CD4-positive, alpha-beta memory T cell (primary cell): ENCODE measurements at regions of chr21 and their contacts with region 1.

Region 1: DNA sequence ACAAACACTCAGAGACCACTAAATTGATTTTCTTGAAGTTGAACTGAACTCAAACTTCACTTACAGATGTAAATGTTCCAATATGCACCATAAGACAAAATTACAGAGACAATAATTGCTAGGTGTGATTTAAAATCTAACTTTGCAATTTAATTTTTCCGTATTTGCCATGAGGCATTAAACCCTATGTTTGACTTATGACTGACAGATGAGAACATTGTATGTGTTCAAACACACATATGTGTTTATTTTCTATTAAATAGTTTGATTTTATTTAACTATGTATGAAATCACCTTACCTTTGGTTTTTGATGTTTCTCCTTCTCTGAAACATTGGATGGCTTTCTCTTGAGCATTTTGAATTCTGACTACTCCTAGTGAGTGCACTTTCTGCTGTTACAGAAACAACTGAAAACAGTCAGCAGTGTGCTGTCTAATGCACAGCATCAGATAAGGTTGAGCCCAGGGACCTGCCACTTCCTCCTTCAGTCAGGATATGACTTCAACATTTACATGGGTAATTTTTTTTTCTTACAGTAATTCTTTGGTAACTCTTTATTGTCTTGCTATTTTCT is at the start of gene SAMSN1:
- DNase-seq: peak; percentile 79 to 90 (median 85)
- H3K4me3 ChIP-seq: peak within 1 kb of the TSS; percentile 48 to 98
- H3K4me3 Mint-ChIP-seq: peak within 1 kb of the TSS; percentile 89 to 99 (median 94)
- H3K27ac ChIP-seq: peak within 1 kb of the TSS; percentile 78
- H3K27ac Mint-ChIP-seq: peak within 1 kb of the TSS; percentile 87 to 97 (median 95)
- H3K4me1 ChIP-seq: peaks cover 78% of the 10 kb centered on the region
- H3K4me1 Mint-ChIP-seq: peaks cover 42 to 79% (median 61%) of the 10 kb centered on the region in 4 donors
- H3K27me3 ChIP-seq: no peaks in the 10 kb centered on the region
- H3K27me3 Mint-ChIP-seq: no peaks in the 10 kb centered on the region
- total RNA-seq, gene SAMSN1: 58.0 to 59.5 TPM

Region 2: GRCh38 chr21:14382835-14383594 is 163.0 kb before region 1 on chr21 and contains the start of gene HSPA13:
- CTCF ChIA-PET with region 1: no interaction called
- POLR2A ChIA-PET with region 1: no interaction called
- intact Hi-C with region 1: loop called (anchors 2 kb)
- DNase-seq: peak; percentile 98 to 100 (median 99)
- H3K4me3 ChIP-seq: peak within 1 kb of the TSS; percentile 77 to 80
- H3K4me3 Mint-ChIP-seq: peak within 1 kb of the TSS; percentile 98 to 100 (median 100)
- H3K27ac ChIP-seq: peak within 1 kb of the TSS; percentile 84
- H3K27ac Mint-ChIP-seq: peak within 1 kb of the TSS; percentile 99 to 100 (median 100)
- H3K4me1 ChIP-seq: peaks cover 35% of the 10 kb centered on the region
- H3K4me1 Mint-ChIP-seq: peaks cover 16 to 51% (median 32%) of the 10 kb centered on the region in 4 donors
- H3K27me3 ChIP-seq: no peaks in the 10 kb centered on the region
- H3K27me3 Mint-ChIP-seq: no peaks in the 10 kb centered on the region
- total RNA-seq, gene HSPA13: 32.0 to 38.5 TPM

Region 3: GRCh38 chr21:14523234-14523633 is 22.8 kb before region 1 on chr21:
- CTCF ChIA-PET with region 1: interaction called, 14 read pairs
- POLR2A ChIA-PET with region 1: interaction called, 29 read pairs
- intact Hi-C with region 1: loop called (anchors 1 kb)
- DNase-seq: peak in 2 of 5 donors; percentile 24 to 51
- H3K4me3 ChIP-seq: no peak overlapping the region
- H3K4me3 Mint-ChIP-seq: peak overlapping the region; percentile 16 to 92 (median 80)
- H3K27ac ChIP-seq: no peak overlapping the region
- H3K27ac Mint-ChIP-seq: peak overlapping the region; percentile 31 to 92 (median 77)
- H3K4me1 ChIP-seq: peaks cover 76% of the 10 kb centered on the region
- H3K4me1 Mint-ChIP-seq: peaks cover 46 to 70% (median 57%) of the 10 kb centered on the region in 4 donors
- H3K27me3 ChIP-seq: no peaks in the 10 kb centered on the region
- H3K27me3 Mint-ChIP-seq: no peaks in the 10 kb centered on the region

Region 4: DNA sequence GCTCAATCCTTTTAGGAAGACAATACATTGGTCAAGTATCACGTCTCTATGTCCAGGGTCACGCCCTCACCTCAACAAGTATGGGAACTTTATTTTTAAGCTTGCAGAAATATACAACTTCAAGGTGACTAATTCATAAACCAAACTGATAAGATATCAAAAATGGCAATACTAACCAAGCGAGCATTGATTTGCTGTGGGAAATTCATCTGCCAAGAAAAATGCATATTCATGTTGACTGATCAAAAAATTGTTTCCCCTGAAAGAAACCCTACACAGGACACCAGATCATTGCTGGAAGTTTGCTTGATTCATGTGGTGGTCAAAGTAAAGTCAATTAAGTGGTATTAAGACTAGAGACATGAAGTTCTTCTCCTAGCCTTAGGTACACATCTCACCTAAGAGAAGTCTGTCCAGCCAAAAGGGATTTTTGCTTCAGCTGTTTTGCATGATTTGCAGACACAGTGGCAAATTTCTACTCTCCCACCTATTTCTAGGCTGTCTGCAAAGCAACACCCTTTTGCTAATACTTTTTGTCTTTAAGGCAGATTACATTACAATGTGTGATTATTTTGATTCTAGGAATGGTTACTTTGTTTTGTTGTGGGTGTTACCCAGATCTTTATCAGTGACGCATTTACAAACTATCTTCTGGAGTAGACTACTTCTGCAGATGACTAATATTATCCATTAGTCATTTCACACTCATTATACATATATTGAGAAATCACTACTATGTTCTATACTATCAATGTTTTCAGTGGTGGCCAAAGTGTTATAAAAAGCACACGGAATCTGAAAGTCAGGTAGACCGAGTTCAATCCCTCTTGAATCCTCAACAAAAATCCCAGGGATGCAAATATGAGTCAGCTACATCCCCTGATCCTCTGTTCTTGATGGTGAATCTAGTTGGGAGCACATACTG is 12.2 kb before region 1 on chr21:
- CTCF ChIA-PET with region 1: interaction called, 4 read pairs
- POLR2A ChIA-PET with region 1: interaction called, 39 read pairs
- intact Hi-C with region 1: loop called (anchors 1 kb)
- DNase-seq: peak; percentile 78 to 87 (median 83)
- H3K4me3 ChIP-seq: peak overlapping the region; percentile 33 to 48
- H3K4me3 Mint-ChIP-seq: peak overlapping the region; percentile 84 to 96 (median 90)
- H3K27ac ChIP-seq: peak overlapping the region; percentile 87
- H3K27ac Mint-ChIP-seq: peak overlapping the region; percentile 97 to 100 (median 98)
- H3K4me1 ChIP-seq: peaks cover 60% of the 10 kb centered on the region
- H3K4me1 Mint-ChIP-seq: peaks cover 50 to 77% (median 59%) of the 10 kb centered on the region in 4 donors
- H3K27me3 ChIP-seq: no peaks in the 10 kb centered on the region
- H3K27me3 Mint-ChIP-seq: peaks cover 0 to 1% of the 10 kb centered on the region in 2 donors

Region 5: DNA sequence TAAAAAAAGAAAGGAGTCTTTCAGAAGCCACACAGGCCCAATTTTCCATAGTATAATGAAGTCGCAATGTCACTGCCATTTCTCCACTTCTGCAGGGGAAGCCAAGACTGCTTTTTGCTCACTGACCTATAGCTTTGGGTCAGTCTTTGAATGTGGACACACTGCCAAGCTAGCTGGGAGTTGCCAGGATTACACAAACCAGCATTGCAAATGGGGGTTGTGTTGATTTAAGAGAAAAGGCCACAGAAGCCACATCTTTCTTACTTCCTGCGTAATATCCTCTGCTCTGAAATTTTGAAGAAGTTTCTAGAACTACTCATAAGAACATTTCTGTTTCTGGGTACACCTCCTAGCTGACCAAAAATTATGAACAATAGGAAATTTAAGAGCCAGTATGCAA is 45.9 kb after region 1 on chr21:
- CTCF ChIA-PET with region 1: interaction called, 3 read pairs
- POLR2A ChIA-PET with region 1: interaction called, 6 read pairs
- intact Hi-C with region 1: loop called (anchors 2 kb)
- DNase-seq: peak in 3 of 5 donors; percentile 16 to 37 (median 29)
- H3K4me3 ChIP-seq: no peak overlapping the region
- H3K4me3 Mint-ChIP-seq: peak overlapping the region in 6 of 8 donors; percentile 5 to 49 (median 26)
- H3K27ac ChIP-seq: no peak overlapping the region
- H3K27ac Mint-ChIP-seq: peak overlapping the region in 6 of 7 donors; percentile 26 to 89 (median 64)
- H3K4me1 ChIP-seq: peaks cover 25% of the 10 kb centered on the region
- H3K4me1 Mint-ChIP-seq: peaks cover 21 to 31% (median 25%) of the 10 kb centered on the region in 4 donors
- H3K27me3 ChIP-seq: no peaks in the 10 kb centered on the region
- H3K27me3 Mint-ChIP-seq: no peaks in the 10 kb centered on the region

Region 6: DNA sequence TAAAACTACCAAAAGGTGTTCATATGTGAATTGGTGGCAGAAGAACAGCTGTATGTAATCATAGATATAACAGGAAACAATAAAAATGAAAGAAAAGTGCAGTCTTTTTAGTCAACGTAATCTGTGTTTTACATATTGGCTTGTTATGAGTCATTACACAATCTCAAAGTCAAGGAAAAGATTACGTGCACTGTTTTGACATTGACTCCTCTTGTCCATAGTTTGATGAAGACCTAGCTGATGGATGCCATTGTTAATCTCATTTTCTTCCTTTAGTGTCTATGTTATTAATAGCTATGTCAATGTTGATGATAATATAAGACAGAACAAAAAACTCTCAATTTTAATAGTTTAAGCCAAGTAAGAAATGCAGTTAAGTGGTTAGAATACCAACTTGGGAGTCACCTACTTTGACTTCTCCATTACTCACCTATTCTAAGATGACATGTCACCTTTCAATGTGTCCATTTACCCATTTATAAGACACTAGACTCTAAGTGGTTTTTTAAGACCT is 84.6 kb after region 1 on chr21:
- CTCF ChIA-PET with region 1: no interaction called
- POLR2A ChIA-PET with region 1: no interaction called
- intact Hi-C with region 1: loop called (anchors 2 kb)
- DNase-seq: peak in 4 of 5 donors; percentile 23 to 41 (median 28)
- H3K4me3 ChIP-seq: no peak overlapping the region
- H3K4me3 Mint-ChIP-seq: peak overlapping the region; percentile 64 to 84 (median 78)
- H3K27ac ChIP-seq: no peak overlapping the region
- H3K27ac Mint-ChIP-seq: peak overlapping the region; percentile 58 to 92 (median 77)
- H3K4me1 ChIP-seq: peaks cover 21% of the 10 kb centered on the region
- H3K4me1 Mint-ChIP-seq: peaks cover 18 to 25% (median 20%) of the 10 kb centered on the region in 4 donors
- H3K27me3 ChIP-seq: no peaks in the 10 kb centered on the region
- H3K27me3 Mint-ChIP-seq: no peaks in the 10 kb centered on the region